ENCODE measurements at regions of chr6 and their contacts with region 1.

Region 1: GRCh38 chr6:22343859-22344258 is 47.0 kb upstream of the PRL start:
- DNase-seq: no peak
- ATAC-seq: no peak
- H3K4me3 ChIP-seq: no peak overlapping the region
- H3K27ac ChIP-seq: no peak overlapping the region
- H3K4me1 ChIP-seq: no peaks in the 10 kb centered on the region
- H3K27me3 ChIP-seq: no peaks in the 10 kb centered on the region
- CTCF ChIP-seq: no peak

Region 2: GRCh38 chr6:22164236-22164635 is 179.6 kb before region 1 on chr6:
- intact Hi-C with region 1: no loop called
- DNase-seq: no peak
- ATAC-seq: no peak
- H3K4me3 ChIP-seq: no peak overlapping the region
- H3K27ac ChIP-seq: no peak overlapping the region
- H3K4me1 ChIP-seq: no peaks in the 10 kb centered on the region
- H3K27me3 ChIP-seq: no peaks in the 10 kb centered on the region
- CTCF ChIP-seq: no peak

Region 3: GRCh38 chr6:23420659-23421350 is 1076.9 kb after region 1 on chr6:
- intact Hi-C with region 1: loop called in 1 of 10 experiments (anchors 10 kb)
- DNase-seq: no peak
- ATAC-seq: no peak
- H3K4me3 ChIP-seq: no peak overlapping the region
- H3K27ac ChIP-seq: no peak overlapping the region
- H3K4me1 ChIP-seq: peaks cover 0 to 7% (median 0%) of the 10 kb centered on the region in 9 donors
- H3K27me3 ChIP-seq: no peaks in the 10 kb centered on the region
- CTCF ChIP-seq: no peak